HEK293 (cell line): ENCODE measurements at regions of chr2 and their contacts with region 1.

Region 1: DNA sequence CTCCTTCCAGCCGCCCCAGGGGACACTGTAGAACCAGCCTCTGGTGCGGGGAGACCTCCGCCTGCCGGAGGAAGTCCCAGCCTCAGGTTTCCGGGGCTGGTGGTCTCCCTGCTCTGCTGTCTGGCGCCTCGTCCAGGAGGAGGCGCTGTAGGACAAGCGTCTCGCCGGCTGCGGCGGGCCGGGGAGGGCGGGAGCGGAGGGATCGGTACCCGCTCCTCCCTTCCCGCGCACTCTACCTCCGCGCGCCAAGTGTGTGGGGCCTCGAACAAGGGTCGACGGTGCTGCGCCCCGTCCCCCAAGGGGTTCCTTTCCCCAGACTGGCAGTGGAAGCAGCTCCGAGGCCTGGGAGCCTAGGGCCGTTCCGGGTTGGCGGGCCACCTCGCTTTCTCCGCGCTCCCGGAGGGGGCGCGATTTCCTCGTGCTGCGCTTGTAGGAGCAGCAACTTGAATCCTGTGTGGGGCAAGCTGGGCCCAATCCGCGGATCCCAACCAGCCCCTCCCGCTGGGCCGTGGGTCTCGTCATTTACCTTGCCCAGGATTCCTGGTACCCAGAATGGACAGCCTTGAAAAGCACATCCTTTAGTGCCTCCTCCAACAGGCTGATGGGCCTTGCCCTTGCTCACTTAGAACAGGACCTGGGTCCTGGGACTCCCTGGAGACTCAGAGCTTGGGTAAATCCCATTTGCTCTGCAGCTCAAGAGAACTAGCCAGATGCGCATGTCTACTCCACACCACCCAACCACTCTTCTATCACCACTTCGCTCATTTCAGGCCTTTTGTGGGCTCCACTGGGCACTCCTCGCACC is 10.6 kb upstream of the HOXD4 start:
- H3K4me3 ChIP-seq: peak overlapping the region; percentile 55
- H3K27ac ChIP-seq: peak overlapping the region; percentile 60; the same call in 1 of the 2 replicates
- H3K4me1 ChIP-seq: peaks cover 8% of the 10 kb centered on the region; the same call in 1 of the 2 replicates
- CTCF ChIP-seq: peak; percentile 97

Region 2: GRCh38 chr2:176126929-176127773 is 13.6 kb before region 1 on chr2:
- CTCF ChIA-PET with region 1: interaction called, 19 read pairs
- POLR2A ChIA-PET with region 1: interaction called, 6 read pairs
- H3K4me3 ChIP-seq: no peak overlapping the region
- H3K27ac ChIP-seq: no peak overlapping the region
- H3K4me1 ChIP-seq: peaks cover 5% of the 10 kb centered on the region; the same call in 1 of the 2 replicates
- CTCF ChIP-seq: peak; percentile 63

Region 3: GRCh38 chr2:176178757-176179295 is 38.1 kb after region 1 on chr2:
- CTCF ChIA-PET with region 1: no interaction called
- POLR2A ChIA-PET with region 1: no interaction called
- H3K4me3 ChIP-seq: no peak overlapping the region
- H3K27ac ChIP-seq: peak overlapping the region; percentile 69; the same call in 1 of the 2 replicates
- H3K4me1 ChIP-seq: peaks cover 4% of the 10 kb centered on the region; the same call in 1 of the 2 replicates
- CTCF ChIP-seq: no peak

Region 4: GRCh38 chr2:176293334-176293733 is 152.6 kb after region 1 on chr2:
- CTCF ChIA-PET with region 1: interaction called, 10 read pairs
- POLR2A ChIA-PET with region 1: no interaction called
- H3K4me3 ChIP-seq: no peak overlapping the region
- H3K27ac ChIP-seq: no peak overlapping the region
- H3K4me1 ChIP-seq: peaks cover 22% of the 10 kb centered on the region
- CTCF ChIP-seq: no peak

Region 5: GRCh38 chr2:176454893-176455811 is 314.4 kb after region 1 on chr2:
- CTCF ChIA-PET with region 1: interaction called, 104 read pairs
- POLR2A ChIA-PET with region 1: interaction called, 4 read pairs
- H3K4me3 ChIP-seq: no peak overlapping the region
- H3K27ac ChIP-seq: no peak overlapping the region
- H3K4me1 ChIP-seq: no peaks in the 10 kb centered on the region; the same call in 1 of the 2 replicates
- CTCF ChIP-seq: peak; percentile 48

Region 6: DNA sequence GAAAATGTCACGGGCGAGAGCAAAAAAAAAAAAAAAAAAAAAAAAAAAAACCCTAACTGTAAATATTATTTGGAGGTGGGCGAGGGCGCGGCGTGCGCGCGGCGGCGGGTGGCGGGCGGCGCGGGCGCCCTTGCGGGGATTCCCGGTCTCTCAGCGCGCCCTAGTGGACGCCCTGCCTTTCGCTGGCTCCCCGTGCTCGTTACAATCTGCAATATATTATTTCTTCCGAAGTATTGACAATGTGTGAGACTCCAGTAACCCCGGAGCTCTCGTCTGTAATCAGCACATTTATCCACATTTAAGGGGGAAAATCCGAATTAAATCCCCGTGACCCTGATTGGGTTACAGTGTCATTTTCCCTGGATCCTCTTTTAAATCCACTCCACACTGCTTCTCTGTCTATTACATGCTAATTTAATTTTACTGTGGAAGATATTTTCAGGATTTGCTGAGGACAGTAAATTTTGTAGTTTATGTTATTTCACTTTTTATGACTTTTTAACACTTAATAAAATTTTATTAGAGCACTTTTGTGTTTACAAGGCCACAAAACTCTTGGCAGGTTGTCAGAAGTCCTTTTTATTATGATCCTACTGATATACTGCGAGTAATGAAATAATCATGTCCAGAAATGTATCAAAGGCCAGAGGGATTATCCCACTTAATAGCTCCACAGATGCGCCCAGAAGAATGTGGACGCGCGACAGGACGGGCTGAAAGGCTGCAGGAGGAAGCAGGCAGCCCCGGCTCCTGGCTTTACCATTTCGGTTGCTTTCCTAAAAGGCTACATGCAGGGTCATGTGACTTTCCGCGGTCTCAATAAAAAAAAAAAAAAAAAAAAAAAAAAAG is 497.7 kb after region 1 on chr2:
- CTCF ChIA-PET with region 1: interaction called, 38 read pairs
- POLR2A ChIA-PET with region 1: interaction called, 3 read pairs
- H3K4me3 ChIP-seq: peak overlapping the region; percentile 69
- H3K27ac ChIP-seq: peak overlapping the region; percentile 94
- H3K4me1 ChIP-seq: 0 out of 2 replicates have a peak, but pooled peaks cover 2% of the 10 kb centered on the region
- CTCF ChIP-seq: no peak